ENCODE measurements at regions of chr5 and their contacts with region 1.

Region 1: GRCh38 chr5:39146831-39147540 is 72.4 kb downstream of the FYB1 start:
- DNase-seq: no peak
- ATAC-seq: no peak
- H3K4me3 Mint-ChIP-seq: no peak overlapping the region
- H3K27ac Mint-ChIP-seq: no peak overlapping the region
- H3K4me1 Mint-ChIP-seq: peaks cover 16% of the 10 kb centered on the region
- H3K27me3 Mint-ChIP-seq: no peaks in the 10 kb centered on the region
- CTCF ChIP-seq: no peak

Region 2: GRCh38 chr5:38922199-38922598 is 224.8 kb before region 1 on chr5:
- CTCF ChIA-PET with region 1: no interaction called
- POLR2A ChIA-PET with region 1: no interaction called
- DNase-seq: peak; percentile 59
- ATAC-seq: peak; percentile 91
- H3K4me3 Mint-ChIP-seq: no peak overlapping the region
- H3K27ac Mint-ChIP-seq: no peak overlapping the region
- H3K4me1 Mint-ChIP-seq: peaks cover 7% of the 10 kb centered on the region
- H3K27me3 Mint-ChIP-seq: no peaks in the 10 kb centered on the region
- CTCF ChIP-seq: peak; percentile 64

Region 3: DNA sequence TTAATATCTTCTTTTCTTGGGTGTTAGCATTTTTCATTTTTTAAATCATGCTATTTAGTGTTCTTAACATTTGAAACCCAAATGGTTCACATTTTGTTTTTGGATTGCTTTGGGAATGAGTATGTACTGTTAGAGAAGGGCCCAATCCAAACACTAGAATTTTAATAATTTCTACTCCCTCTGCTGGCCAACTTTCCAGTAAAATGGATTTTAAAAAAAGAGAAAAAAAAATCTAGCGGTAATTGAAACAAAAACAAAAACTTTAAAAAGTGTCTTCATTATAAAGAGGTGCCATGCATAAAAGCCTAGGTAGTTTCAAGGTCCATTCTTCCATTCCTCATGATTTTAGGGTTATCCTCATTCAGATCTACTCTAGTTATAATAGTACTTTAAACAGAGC is 40.7 kb before region 1 on chr5:
- CTCF ChIA-PET with region 1: no interaction called
- POLR2A ChIA-PET with region 1: no interaction called
- DNase-seq: no peak
- ATAC-seq: no peak
- H3K4me3 Mint-ChIP-seq: no peak overlapping the region
- H3K27ac Mint-ChIP-seq: no peak overlapping the region
- H3K4me1 Mint-ChIP-seq: no peaks in the 10 kb centered on the region
- H3K27me3 Mint-ChIP-seq: no peaks in the 10 kb centered on the region
- CTCF ChIP-seq: no peak

Region 4: DNA sequence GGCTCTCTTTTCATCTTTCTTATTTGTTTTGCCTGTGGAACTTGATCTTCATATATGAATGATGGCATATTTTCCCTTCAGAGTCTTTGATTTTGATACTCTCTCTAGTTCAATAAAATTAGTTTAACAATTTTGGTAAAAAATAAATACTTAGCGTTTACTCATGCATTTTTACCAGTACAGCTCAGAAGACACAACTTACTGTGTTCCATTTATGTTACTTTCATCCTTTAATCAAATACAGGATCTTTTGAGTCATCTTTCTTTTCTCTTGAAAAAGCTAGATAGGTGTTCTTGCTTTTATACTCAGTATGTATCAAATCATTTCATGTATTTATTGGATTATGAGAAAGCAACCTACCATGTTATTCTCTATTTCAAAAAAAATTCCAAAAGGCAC is 25.7 kb before region 1 on chr5:
- CTCF ChIA-PET with region 1: no interaction called
- POLR2A ChIA-PET with region 1: no interaction called
- DNase-seq: no peak
- ATAC-seq: no peak
- H3K4me3 Mint-ChIP-seq: no peak overlapping the region
- H3K27ac Mint-ChIP-seq: no peak overlapping the region
- H3K4me1 Mint-ChIP-seq: no peaks in the 10 kb centered on the region
- H3K27me3 Mint-ChIP-seq: no peaks in the 10 kb centered on the region
- CTCF ChIP-seq: no peak

Region 5: DNA sequence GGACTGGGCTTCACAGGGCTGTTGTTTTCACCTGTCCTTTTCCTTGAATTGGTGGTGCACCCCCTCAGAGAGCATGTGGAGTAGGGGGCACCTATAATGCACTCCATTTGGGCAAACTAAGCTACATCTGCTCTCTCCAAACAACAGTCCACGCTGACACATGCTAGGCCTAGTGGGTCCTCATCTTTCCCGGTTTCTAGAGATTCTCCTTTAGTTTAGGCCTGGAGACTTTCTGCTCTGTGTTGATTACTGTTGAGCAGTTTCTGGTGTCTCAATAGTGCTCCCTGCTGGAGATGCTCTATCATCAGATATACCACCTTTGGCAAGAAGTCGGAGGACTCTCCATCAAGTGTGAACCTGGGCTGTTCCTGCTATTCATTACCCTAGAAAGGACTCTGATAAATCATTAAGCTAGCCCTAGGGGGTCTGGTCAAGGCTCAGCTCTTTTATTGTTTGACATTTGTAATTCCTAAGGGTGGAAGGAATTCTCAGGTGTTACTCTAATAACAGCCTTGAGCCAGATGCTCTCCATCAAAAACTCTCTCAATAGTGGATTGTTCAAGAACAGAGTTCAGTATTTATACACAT is 136.3 kb after region 1 on chr5:
- CTCF ChIA-PET with region 1: interaction called, 11 read pairs
- POLR2A ChIA-PET with region 1: no interaction called
- DNase-seq: peak; percentile 18
- ATAC-seq: peak; percentile 100
- H3K4me3 Mint-ChIP-seq: no peak overlapping the region
- H3K27ac Mint-ChIP-seq: peak overlapping the region; percentile 37; the same call in 1 of the 2 replicates
- H3K4me1 Mint-ChIP-seq: peaks cover 13% of the 10 kb centered on the region
- H3K27me3 Mint-ChIP-seq: no peaks in the 10 kb centered on the region
- CTCF ChIP-seq: peak; percentile 42; the same call in 1 of the 2 replicates